Mammary epithelial cell (primary cell): ENCODE measurements at regions of chr7 and their contacts with region 1.

Region 1: DNA sequence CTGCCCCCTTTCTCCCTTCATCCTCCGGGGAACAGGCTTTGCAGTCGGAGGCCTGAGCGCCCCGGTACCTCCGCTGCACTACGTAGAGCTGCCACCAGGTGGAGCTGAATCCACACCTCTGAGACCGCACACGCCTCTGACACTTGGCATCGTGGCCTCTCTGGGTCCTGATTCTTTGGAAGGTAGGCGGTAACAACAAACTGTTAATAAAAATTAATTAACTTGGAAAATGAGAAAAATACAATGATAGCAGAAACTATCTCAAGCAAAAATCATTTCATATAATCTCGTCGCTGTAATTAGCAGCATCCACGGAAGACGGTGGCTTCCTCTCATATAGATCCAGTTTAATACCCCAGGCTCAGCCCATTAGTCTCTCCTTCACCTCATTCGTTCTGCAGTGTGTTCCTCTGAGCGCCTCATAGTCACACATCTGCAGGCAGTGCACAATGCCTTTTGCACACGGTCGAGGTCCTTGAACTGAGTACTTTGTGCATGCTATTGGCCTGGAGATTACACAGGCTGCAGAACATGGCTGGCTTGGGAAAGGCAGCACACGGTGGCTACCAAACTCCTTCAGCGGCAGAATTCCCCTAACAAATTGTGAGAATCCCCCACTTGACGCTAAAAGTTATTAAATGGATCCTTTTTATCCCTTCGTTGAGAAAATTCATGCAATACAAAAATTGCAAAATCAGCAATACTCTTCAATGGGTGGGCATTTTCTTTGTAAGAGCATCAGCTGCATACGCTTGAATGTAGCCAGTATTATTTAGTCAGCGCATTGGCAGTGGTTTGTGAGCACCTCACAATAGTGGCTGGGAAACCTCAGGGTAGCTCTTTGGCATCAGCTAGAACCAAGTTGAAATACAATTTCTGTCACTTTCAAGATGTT is 18.7 kb downstream of the OR9A2 start:
- DNase-seq: peak; percentile 32
- H3K4me3 ChIP-seq: no peak overlapping the region
- H3K27ac ChIP-seq: no peak overlapping the region
- H3K4me1 ChIP-seq: peaks cover 1% of the 10 kb centered on the region
- H3K27me3 ChIP-seq: no peaks in the 10 kb centered on the region
- CTCF ChIP-seq: peak; percentile 86 to 96

Region 2: DNA sequence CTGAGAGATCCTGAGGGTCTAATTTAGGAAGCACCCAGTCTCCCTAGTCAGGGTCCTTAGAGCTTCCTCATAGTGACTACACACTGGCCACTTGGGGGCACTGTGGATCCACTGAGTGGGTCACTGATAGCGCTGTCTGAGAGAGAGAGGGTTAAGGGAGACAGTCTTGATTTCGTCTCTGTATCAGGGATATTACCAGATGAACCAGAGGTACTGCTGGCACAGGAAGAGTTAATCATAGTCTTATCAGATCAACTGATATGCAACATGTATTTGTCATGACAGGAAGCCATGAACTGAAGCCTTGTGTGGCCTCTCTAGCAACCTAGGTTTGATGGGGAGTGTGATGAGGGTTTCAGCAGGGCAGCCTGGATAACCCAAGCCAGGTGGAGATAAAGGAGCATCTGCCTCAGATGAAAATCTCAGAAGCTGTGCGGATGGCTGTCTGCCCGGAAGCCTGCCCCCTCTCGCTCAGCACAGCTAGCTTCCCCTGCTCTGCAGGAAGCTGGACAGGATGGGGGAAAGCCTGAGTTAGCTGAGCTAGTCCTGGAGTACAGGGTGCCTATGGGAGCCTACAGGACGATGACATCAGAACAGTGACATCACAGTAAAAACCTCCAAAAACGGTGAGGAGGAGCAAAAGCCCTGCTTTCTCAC is 473.0 kb before region 1 on chr7:
- CTCF ChIA-PET with region 1: no interaction called
- dilution Hi-C with region 1: no loop called
- in situ Hi-C with region 1: no loop called
- intact Hi-C with region 1: loop called (anchors 2 kb)
- DNase-seq: peak; percentile 70
- H3K4me3 ChIP-seq: no peak overlapping the region
- H3K27ac ChIP-seq: no peak overlapping the region
- H3K4me1 ChIP-seq: peaks cover 24% of the 10 kb centered on the region
- H3K27me3 ChIP-seq: no peaks in the 10 kb centered on the region
- CTCF ChIP-seq: peak; percentile 94 to 98

Region 3: DNA sequence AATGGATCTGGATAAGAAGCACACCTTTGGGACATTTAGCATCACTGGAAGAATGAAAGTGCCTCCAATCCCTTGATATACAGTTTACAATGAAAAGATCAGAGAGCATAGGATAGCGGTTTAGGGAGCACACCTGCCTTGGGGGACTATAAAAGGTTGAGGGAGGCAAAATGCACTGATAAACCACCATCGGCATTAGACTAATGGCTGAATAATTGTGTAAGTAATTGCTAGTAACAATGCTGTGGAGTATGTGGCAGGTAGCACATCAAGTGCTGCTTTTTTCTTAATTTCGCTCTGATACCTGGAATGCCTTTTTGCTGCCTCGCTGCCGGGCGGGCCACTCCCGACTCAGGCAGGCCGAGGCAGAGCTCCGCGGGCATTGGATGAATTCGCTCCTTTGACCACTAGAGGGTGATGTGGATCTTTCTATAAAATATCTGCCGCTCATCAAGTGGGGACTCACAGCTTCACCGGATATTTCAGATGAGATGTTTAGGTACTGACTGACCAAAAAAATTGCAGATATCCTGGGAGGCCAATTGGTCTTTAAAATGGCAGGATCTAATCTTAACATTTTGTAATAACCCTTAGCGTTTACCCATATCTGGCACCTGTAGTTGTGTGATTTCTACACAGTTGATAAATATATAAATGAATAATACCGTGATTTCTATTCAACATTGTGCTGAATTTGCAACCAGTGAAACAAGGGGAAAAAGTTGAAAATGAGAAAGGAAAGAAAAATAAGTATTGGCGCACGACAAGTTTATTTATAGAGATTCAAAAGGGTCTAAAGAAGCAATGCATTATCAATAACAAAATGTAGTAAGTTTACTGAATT is 375.7 kb before region 1 on chr7:
- CTCF ChIA-PET with region 1: no interaction called
- dilution Hi-C with region 1: no loop called
- in situ Hi-C with region 1: no loop called
- intact Hi-C with region 1: loop called (anchors 1 kb)
- DNase-seq: peak; percentile 55
- H3K4me3 ChIP-seq: no peak overlapping the region
- H3K27ac ChIP-seq: no peak overlapping the region
- H3K4me1 ChIP-seq: no peaks in the 10 kb centered on the region
- H3K27me3 ChIP-seq: no peaks in the 10 kb centered on the region
- CTCF ChIP-seq: peak; percentile 72 to 74

Region 4: GRCh38 chr7:142873281-142873787 is 134.9 kb before region 1 on chr7:
- CTCF ChIA-PET with region 1: no interaction called
- dilution Hi-C with region 1: no loop called
- in situ Hi-C with region 1: no loop called
- intact Hi-C with region 1: loop called (anchors 2 kb)
- DNase-seq: no peak
- H3K4me3 ChIP-seq: no peak overlapping the region
- H3K27ac ChIP-seq: no peak overlapping the region
- H3K4me1 ChIP-seq: no peaks in the 10 kb centered on the region
- H3K27me3 ChIP-seq: no peaks in the 10 kb centered on the region
- CTCF ChIP-seq: peak; percentile 57 to 67

Region 5: GRCh38 chr7:142964502-142965246 is 43.6 kb before region 1 on chr7:
- CTCF ChIA-PET with region 1: no interaction called
- dilution Hi-C with region 1: no loop called
- in situ Hi-C with region 1: no loop called
- intact Hi-C with region 1: no loop called
- DNase-seq: no peak
- H3K4me3 ChIP-seq: no peak overlapping the region
- H3K27ac ChIP-seq: no peak overlapping the region
- H3K4me1 ChIP-seq: no peaks in the 10 kb centered on the region
- H3K27me3 ChIP-seq: no peaks in the 10 kb centered on the region
- CTCF ChIP-seq: no peak

Region 6: DNA sequence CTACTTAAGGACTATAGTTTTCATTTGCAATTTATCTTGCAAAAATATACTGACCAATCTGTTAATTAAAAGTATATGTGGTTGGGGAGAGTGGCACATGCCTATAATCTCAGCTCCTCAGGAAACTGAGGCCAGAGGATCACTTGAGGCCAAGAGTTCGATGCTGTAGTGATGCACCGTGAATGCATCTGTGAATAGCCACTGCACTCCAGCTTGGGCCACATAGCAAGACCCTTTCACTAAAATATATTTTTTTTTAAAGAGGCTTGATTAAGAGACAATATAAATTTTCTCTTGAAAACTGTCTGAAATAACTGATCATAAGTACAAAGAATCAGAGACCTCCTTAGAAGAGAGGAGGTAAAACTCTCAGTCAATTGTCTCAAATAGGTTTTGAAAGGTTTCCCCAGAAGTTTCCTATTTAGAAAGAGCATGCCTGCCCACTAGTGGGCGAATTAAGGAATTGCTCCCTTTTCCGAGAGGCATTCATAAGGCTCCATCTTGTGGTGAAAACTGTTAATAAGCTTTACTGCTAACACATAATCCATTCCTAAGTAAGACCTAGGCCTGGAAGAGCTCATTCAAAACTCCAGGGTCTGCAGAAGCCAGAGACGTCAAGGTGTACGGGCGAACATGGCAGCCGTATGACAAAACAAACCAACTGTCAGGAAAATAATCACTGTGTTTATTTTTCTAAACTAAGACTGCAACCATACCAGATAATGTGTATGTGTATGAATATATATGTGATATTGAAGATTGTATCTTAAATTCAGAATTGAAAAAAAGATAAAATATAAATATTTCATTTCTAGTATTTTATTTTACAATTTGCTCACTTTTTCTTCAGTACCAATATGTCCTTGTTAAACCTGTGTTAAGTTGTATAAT is 206.8 kb after region 1 on chr7:
- CTCF ChIA-PET with region 1: interaction called, 12 read pairs
- dilution Hi-C with region 1: loop called (anchors 5 kb)
- in situ Hi-C with region 1: loop called (anchors 5 kb)
- intact Hi-C with region 1: loop called (anchors 1 kb)
- DNase-seq: peak; percentile 67
- H3K4me3 ChIP-seq: no peak overlapping the region
- H3K27ac ChIP-seq: no peak overlapping the region
- H3K4me1 ChIP-seq: no peaks in the 10 kb centered on the region
- H3K27me3 ChIP-seq: no peaks in the 10 kb centered on the region
- CTCF ChIP-seq: peak; percentile 99 to 100

Region 7: DNA sequence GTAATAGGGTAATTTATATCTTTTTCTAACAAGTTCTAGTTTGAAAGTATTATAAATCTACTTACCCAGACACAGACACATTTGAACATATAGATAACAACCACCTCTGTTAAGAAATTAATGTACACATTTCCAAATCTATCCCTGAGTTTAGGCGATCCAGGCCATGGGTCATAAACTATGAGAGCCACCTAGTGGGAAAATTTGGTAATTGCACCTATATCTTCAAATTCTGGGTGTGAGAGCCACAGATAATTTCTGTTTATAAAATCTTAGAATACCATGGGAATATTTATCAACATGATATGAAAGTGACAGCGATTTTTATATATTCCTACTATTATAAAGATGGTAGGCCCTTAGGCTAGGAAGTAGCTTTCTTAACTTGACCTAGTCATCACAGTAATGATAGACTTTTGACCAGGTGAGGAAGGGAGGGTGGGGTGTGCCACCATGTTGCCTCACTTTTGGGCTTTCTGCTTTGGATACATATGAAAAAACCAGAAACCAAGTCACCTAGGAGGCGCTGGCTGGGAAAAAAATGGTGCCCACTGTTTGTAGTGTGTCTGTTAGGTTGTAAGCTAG is 408.4 kb after region 1 on chr7:
- CTCF ChIA-PET with region 1: no interaction called
- dilution Hi-C with region 1: no loop called
- in situ Hi-C with region 1: loop called in 1 of 2 experiments (anchors 10 kb)
- intact Hi-C with region 1: loop called (anchors 1 kb)
- DNase-seq: no peak
- H3K4me3 ChIP-seq: peak overlapping the region in 2 of 3 experiments; percentile 33 to 38
- H3K27ac ChIP-seq: peak overlapping the region; percentile 89
- H3K4me1 ChIP-seq: peaks cover 33% of the 10 kb centered on the region
- H3K27me3 ChIP-seq: no peaks in the 10 kb centered on the region
- CTCF ChIP-seq: peak; percentile 61 to 70